IMR-90 (cell line): ENCODE measurements at regions of chr15 and their contacts with region 1.

Region 1: DNA sequence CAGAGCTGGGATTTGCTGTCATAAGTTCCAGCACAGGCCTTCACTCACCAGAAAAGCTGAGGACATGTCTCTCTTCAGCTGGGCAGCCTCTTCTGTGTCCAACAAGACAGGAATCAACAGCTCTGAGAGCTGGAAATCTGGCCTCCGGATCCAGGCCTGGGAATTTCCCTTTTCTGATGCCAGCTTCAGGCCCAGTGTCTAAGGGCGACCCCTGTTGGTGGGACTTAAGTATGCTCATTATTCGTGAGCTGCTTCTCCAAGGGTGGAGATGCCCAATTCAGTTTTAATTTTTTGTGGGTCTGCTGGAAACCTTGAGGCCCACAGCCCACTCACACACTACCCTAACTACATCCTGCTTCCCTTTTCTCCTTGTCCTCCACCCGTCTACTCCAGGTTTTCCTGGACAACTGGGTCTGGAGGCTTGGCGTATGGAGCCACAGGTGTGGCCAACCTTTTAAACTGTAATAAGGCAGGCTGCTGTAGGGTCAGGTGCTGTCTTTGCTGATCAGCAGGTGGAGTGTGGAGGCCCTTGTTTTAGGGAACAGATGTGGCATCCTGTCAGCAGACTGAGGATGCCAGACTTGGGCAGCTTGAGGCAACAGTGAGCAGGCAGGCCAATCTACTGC is 2.6 kb upstream of the CEMIP start:
- DNase-seq: peak; percentile 87
- ATAC-seq: peak; percentile 4; the same call in 1 of the 2 replicates
- H3K4me3 ChIP-seq: no peak overlapping the region
- H3K27ac ChIP-seq: peak overlapping the region; percentile 19; the same call in 1 of the 2 replicates
- H3K4me1 ChIP-seq: peaks cover 20% of the 10 kb centered on the region
- H3K27me3 ChIP-seq: no peaks in the 10 kb centered on the region
- CTCF ChIP-seq: peak; percentile 94
- POLR2A ChIP-seq: no peak
- RAD21 ChIP-seq: peak; percentile 91

Region 2: GRCh38 chr15:80242132-80242769 is 534.3 kb before region 1 on chr15:
- CTCF ChIA-PET with region 1: no interaction called
- POLR2A ChIA-PET with region 1: no interaction called
- dilution Hi-C with region 1: no loop called
- in situ Hi-C with region 1: no loop called
- intact Hi-C with region 1: loop called (anchors 1 kb)
- DNase-seq: peak; percentile 24
- ATAC-seq: peak; percentile 69
- H3K4me3 ChIP-seq: no peak overlapping the region
- H3K27ac ChIP-seq: no peak overlapping the region
- H3K4me1 ChIP-seq: no peaks in the 10 kb centered on the region; the same call in 1 of the 2 replicates
- H3K27me3 ChIP-seq: peaks cover 61% of the 10 kb centered on the region
- CTCF ChIP-seq: peak; percentile 54
- POLR2A ChIP-seq: no peak
- RAD21 ChIP-seq: peak; percentile 52

Region 3: DNA sequence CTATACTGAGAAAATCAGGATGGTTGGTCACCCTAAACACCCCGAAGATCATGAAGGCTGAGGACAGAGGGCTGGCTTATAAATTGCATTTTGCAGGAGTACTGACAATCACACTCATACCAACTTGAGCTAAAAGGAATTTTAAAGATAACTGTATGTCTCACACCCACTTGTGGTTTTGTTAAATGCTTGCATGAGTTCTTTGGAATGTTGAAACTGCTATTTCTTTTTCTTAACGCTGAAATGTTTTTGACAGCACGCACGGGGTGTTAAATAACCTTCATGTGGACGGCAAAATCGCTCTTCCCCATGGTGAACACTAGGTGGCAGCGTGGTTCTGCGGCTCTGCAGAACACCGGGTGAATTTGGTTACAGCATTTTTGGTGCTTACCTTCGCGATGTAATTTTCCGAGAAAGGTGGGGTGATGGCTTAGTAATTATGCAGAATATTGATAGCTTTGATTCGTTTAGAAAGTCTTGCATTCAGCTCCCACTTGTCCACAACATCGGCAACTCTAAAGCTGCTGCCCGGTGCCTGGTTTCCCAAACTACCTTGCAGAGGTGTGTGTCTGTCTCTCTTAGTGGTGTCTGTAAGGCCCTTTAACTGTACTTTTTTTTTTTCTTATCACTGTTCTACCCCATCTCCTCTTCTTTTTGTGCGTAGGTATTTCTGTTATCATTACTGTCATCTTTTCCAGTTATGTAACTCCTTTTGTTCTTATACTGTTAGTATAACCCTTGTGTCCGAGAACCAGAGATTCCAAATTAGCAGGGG is 320.7 kb before region 1 on chr15:
- CTCF ChIA-PET with region 1: interaction called, 19 read pairs
- POLR2A ChIA-PET with region 1: interaction called, 3 read pairs
- dilution Hi-C with region 1: no loop called
- in situ Hi-C with region 1: loop called (anchors 5 kb)
- intact Hi-C with region 1: loop called (anchors 1 kb)
- DNase-seq: peak; percentile 97
- ATAC-seq: peak; percentile 79
- H3K4me3 ChIP-seq: no peak overlapping the region
- H3K27ac ChIP-seq: peak overlapping the region; percentile 79; the same call in 1 of the 2 replicates
- H3K4me1 ChIP-seq: peaks cover 20% of the 10 kb centered on the region
- H3K27me3 ChIP-seq: no peaks in the 10 kb centered on the region
- CTCF ChIP-seq: peak; percentile 99
- POLR2A ChIP-seq: peak; percentile 46; the same call in 1 of the 2 replicates
- RAD21 ChIP-seq: peak; percentile 100

Region 4: GRCh38 chr15:80567721-80568157 is 208.8 kb before region 1 on chr15:
- CTCF ChIA-PET with region 1: interaction called, 50 read pairs
- POLR2A ChIA-PET with region 1: interaction called, 3 read pairs
- dilution Hi-C with region 1: no loop called
- in situ Hi-C with region 1: loop called (anchors 5 kb)
- intact Hi-C with region 1: loop called (anchors 1 kb)
- DNase-seq: peak; percentile 89
- ATAC-seq: peak; percentile 95
- H3K4me3 ChIP-seq: no peak overlapping the region
- H3K27ac ChIP-seq: peak overlapping the region; percentile 49
- H3K4me1 ChIP-seq: peaks cover 16% of the 10 kb centered on the region
- H3K27me3 ChIP-seq: no peaks in the 10 kb centered on the region
- CTCF ChIP-seq: peak; percentile 97
- POLR2A ChIP-seq: peak; percentile 56
- RAD21 ChIP-seq: peak; percentile 97

Region 5: DNA sequence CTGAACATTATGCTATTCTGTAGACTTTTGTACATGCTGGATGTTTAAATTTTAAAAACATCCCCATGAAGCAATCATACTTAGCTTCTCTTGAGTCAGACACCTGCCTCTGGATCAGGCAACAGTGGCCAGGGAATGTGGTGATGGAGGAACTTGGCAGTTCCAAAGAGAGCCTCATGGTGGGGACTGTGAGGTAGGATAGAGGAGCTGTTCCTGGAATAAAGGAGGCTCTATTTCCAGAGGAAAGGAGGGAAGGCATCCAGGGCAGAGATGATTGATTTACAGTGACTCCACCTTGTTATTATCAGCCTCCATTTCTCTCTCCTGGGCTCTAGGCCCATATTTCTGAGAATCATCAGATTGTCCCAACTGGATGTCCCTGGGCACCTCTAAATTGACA is 116.4 kb before region 1 on chr15:
- CTCF ChIA-PET with region 1: interaction called, 10 read pairs
- POLR2A ChIA-PET with region 1: no interaction called
- dilution Hi-C with region 1: no loop called
- in situ Hi-C with region 1: no loop called
- intact Hi-C with region 1: no loop called
- DNase-seq: peak; percentile 41
- ATAC-seq: peak; percentile 62; the same call in 1 of the 2 replicates
- H3K4me3 ChIP-seq: no peak overlapping the region
- H3K27ac ChIP-seq: no peak overlapping the region
- H3K4me1 ChIP-seq: peaks cover 4% of the 10 kb centered on the region
- H3K27me3 ChIP-seq: no peaks in the 10 kb centered on the region
- CTCF ChIP-seq: peak; percentile 40
- POLR2A ChIP-seq: no peak
- RAD21 ChIP-seq: peak; percentile 48